Left cardiac atrium (tissue), 4 donors: ENCODE measurements at regions of chr11 and their contacts with region 1.

Region 1: GRCh38 chr11:63838678-63839507 is at the start of gene MARK2:
- DNase-seq: peak; percentile 98
- ATAC-seq: peak; percentile 88 to 91
- total RNA-seq, gene MARK2: 33.5 to 37.5 TPM

Region 2: GRCh38 chr11:63892228-63892627 is 53.3 kb after region 1 on chr11:
- intact Hi-C with region 1: loop called in 1 of 2 experiments (anchors 10 kb)
- DNase-seq: no peak
- ATAC-seq: no peak

Region 3: GRCh38 chr11:63945477-63946163 is 106.7 kb after region 1 on chr11:
- intact Hi-C with region 1: loop called (anchors 1 to 5 kb)
- DNase-seq: peak; percentile 71
- ATAC-seq: peak; percentile 81 to 87